ENCODE measurements at regions of chr10 and their contacts with region 1.

Region 1: GRCh38 chr10:128859738-128860386 is 607.2 kb upstream of the MGMT start:
- DNase-seq: no peak
- ATAC-seq: no peak

Region 2: DNA sequence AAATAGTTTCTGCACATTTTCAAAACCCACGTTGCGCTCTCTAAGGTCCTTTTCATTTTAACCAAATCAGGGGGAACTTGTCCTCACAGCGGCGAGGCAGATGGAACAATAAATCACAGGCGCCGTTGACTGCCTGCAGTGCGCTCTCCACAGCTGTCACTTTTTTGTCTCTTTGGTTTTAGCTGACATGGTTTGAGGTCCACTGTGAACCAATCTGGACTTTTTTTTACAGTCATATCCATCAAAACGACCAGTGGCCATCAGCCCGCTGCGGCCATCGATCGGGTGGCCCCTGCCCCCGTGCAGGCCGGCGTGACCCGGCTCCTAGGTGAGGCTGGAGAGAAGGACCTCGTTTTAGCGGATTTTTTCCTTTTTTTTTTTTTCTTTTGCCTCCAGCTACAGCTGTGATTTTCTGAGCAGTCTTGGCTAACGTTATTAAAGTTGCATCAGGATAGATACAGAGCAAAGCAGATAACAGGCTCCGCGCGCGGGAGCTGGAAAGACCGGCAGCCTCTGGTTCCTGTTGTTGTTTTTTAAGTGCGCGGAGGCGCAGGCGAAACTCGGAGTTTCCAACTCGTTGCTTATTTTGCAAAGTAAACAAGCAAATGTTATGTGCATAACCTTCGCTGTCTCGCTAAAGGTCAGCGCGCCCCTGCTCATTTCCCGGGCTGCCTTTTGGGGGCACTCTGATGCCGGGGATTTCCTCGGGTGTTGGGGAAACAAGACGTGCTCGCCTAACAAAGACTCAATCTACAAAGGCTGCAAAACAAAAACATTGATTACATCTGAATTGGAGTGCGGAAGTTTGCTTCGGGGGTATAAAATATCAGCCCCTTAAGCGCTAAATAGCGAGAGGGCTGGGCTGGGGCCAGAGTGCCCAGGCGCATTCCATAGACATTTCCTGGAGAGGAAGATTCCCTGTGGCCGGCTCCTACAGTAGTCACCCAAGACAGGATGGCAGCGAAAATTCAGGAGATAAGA is 318.8 kb before region 1 on chr10:
- intact Hi-C with region 1: loop called in 1 of 2 experiments (anchors 10 kb)
- DNase-seq: no peak
- ATAC-seq: peak; percentile 45 to 51

Region 3: DNA sequence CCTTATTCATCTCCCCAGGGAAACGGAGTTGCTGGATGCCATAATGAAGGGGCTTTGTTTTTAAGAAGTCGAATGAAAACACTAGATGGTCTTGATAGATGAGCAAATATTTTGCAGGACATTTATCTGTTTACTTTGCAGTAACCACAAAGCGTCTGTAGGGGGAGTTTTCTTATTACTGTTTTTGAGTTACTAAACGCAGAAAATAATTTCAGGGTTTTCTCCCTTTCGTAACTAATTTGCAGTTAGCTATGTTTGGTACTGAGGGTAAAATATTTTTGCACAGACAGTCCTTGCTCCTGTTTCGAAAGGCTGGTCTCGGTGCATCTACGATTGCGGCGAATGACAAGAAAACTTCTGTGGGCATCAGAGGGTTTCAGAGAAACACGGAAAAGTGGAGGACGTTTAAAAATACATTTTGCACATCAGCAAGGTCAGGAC is 228.0 kb before region 1 on chr10:
- intact Hi-C with region 1: loop called (anchors 5 to 10 kb)
- DNase-seq: no peak
- ATAC-seq: no peak

Region 4: DNA sequence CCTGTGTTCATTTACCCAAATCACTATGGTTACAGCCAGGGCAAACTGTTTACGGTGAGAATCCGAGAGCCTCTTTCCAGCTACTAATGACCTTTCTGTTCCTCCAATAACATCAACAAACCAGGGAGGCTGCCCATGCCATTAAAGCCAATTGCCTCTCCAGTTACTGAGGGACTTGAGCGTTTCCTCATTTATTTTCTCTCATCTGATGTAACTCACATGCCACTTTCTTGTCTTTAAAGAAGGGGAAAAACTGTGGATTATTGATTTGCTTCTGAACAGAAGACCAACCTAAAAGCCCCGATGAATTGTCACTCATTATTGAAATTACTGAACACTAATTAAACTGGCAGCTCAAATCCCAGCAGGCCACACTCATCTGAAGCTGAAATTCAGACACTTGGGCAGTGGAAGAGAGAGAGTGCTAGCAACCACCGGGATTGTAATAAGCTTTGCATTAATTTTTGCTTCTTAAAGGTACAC is 137.9 kb before region 1 on chr10:
- intact Hi-C with region 1: no loop called
- DNase-seq: no peak
- ATAC-seq: no peak

Region 5: GRCh38 chr10:128763588-128763987 is 96.3 kb before region 1 on chr10:
- intact Hi-C with region 1: no loop called
- DNase-seq: no peak
- ATAC-seq: no peak

Region 6: DNA sequence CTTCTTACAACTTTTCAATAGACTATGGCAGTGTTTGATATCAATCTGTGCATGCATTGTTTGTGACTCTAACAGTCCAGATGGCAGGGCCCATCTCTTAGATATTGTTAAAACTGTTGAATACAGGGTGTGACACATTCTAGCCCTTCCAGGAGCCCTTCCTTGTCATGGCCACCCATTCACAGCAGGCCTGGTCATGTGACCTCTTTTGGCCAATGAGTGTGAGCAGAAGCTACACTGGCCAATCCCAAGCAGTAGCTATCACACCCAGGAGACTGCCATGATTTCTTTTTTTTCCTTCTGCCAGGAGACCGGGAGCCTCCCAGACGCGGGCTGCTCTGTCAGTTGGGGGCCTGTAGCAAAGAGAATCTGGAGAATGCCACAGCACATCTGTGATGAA is 78.2 kb before region 1 on chr10:
- intact Hi-C with region 1: no loop called
- DNase-seq: no peak
- ATAC-seq: no peak

Measured in left cardiac atrium (tissue), 4 donors.